Posterior vena cava (tissue), 2 donors: ENCODE measurements at regions of chr3 and their contacts with region 1.

Region 1: GRCh38 chr3:97076673-97077072 is 262.3 kb downstream of the EPHA6 start:
- DNase-seq: no peak

Region 2: DNA sequence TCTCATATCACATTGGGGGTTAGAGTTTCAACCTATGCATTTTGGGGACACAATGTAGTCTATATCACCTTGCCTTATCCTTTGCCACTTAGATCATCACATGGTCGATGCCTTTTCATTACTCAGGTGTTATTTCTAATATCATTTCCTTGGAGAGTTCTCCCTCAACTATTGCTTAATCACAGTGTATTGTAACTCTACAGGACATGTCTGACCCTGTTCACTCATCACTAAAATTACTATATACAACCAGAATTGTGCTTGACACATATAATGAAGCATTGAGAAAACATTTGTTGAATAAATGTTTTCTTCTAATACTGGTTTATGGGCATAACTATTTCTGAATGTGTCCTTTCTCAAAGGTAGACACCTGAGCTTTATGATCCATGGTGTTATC is 54.9 kb before region 1 on chr3:
- intact Hi-C with region 1: no loop called
- DNase-seq: no peak

Region 3: DNA sequence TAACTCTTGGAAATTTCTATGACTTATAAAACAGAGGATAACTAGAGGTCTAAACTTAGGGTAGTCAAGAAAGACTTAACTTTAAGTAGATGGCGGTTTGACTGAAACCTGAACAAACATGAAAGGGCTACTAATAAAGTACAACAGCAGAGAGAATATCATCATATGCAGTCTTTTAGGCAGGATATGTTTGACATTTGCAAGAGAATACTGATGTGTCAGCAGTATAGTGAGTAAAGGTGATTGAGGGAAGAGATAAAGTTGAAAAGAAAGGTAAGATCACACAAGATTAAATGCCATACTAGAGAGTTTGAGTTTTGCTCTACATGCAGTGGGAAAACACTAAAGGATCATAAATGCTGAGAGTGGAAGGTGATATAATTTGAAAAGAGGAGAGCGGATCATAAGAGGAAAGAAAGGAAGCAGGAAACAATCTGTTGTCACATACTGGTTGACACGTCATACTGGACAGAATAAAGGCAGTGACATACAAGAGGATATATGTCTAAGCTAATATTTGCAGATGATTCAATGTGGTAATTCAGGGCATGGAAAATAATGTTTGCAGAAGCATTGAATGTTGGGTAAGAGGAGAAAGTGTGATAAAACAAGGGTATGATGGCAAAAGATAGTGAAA is 39.3 kb before region 1 on chr3:
- intact Hi-C with region 1: loop called in 1 of 2 experiments (anchors 2 kb)
- DNase-seq: no peak